Dorsolateral prefrontal cortex (tissue), 120 donors: ENCODE measurements at regions of chr3 and their contacts with region 1.

Region 1: GRCh38 chr3:9649791-9650521 is 651 bp downstream of the MTMR14 start:
- DNase-seq: no peak
- H3K4me3 ChIP-seq: peak overlapping the region; percentile 67 to 100 (median 99)
- H3K27ac ChIP-seq: peak overlapping the region in 57 of 59 donors; percentile 41 to 95 (median 83)
- H3K27me3 ChIP-seq: no peaks in the 10 kb centered on the region
- CTCF ChIP-seq: no peak

Region 2: DNA sequence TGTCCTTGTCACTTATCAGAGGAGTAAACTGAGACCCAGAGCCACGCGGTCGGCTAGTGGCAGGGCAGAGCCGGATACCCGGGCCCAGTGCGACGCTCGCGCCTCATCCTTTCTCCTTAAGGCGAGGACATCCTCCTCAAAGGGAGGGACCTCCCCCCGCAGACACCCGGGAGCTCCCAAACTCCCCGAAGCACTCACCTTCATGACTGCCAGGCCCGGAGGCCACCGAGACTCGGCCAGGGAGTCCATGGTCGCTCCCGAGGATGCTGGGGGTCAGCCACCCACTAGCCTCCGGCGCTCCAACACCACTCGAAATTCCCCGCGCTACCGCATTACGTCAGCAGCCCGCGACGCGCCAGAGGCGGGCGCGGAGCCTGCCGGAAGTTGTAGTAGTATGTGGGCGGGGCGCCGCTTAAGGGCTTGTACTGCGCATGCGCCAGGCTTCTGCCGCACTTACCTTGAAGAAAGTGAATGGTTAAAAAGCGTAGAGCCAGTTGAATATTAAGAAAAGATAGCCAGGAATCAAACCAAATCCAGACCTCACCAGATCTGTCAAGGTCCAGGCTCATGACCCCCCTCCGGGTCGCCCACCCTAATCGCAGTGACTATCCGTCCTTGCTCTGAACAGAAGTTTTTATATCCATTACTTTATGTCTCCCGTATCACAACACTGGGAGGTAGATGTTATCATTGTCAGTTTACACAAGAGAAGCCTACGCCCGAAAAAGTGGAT is 686.7 kb before region 1 on chr3 and contains the start of gene RAD18:
- intact Hi-C with region 1: loop called in 1 of 2 experiments (anchors 10 kb)
- DNase-seq: peak; percentile 79 to 92 (median 84)
- H3K4me3 ChIP-seq: peak within 1 kb of the TSS; percentile 51 to 99 (median 88)
- H3K27ac ChIP-seq: peak within 1 kb of the TSS in 56 of 59 donors; percentile 3 to 90 (median 70)
- H3K27me3 ChIP-seq: no peaks in the 10 kb centered on the region
- CTCF ChIP-seq: peak in 29 of 56 donors; percentile 5 to 61 (median 28)
- total RNA-seq, gene RAD18: 7.8 to 24.6 (median 13.3) TPM

Region 3: DNA sequence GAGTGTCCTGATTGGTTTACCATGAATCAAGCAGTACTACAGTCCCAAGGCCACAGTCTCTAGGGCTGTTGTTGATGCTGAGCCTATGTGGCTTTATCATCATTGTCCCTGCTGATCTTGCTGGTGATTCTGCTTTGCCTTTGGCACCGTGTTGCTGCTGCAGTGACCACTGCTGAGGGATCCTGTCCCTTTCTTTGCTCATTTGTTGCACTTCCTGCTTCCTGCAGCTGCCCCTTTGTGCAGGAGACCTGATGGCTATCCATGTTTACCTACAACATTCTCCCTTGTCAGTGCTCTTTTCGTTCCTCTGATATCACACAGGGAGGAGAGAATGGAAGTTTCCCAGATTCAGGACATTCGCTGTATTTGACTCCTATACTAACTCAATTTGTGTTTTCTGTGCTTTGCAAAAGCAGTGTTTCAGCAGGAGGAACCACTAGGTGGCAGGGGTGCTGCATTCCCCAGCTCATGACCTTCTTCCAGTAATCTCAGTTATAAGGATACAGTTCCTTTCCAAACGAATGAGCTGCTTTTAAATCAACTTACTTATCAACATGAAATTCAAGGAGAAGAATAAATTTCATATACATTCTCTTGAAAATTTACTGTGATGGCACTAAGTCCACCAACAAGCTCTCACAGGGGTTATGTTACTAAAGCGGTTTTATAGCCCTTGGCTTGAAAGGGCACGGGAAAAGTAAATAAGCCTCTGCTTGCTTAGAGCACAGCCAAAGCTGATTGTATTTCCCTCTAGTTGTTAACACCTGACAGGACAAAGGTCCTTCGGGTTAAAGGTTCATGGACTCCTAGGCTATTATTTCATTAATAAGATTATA is 296.8 kb before region 1 on chr3:
- intact Hi-C with region 1: loop called in 1 of 2 experiments (anchors 10 kb)
- DNase-seq: peak; percentile 53 to 87 (median 72)
- H3K4me3 ChIP-seq: no peak overlapping the region
- H3K27ac ChIP-seq: peak overlapping the region in 7 of 59 donors; percentile 2 to 49 (median 39)
- H3K27me3 ChIP-seq: no peaks in the 10 kb centered on the region
- CTCF ChIP-seq: peak; percentile 65 to 94 (median 86)

Region 4: GRCh38 chr3:9409981-9410854 is 239.7 kb before region 1 on chr3:
- intact Hi-C with region 1: no loop called
- DNase-seq: no peak
- H3K4me3 ChIP-seq: no peak overlapping the region
- H3K27ac ChIP-seq: peak overlapping the region in 3 of 59 donors; percentile 0 to 7 (median 4)
- H3K27me3 ChIP-seq: no peaks in the 10 kb centered on the region
- CTCF ChIP-seq: no peak

Region 5: DNA sequence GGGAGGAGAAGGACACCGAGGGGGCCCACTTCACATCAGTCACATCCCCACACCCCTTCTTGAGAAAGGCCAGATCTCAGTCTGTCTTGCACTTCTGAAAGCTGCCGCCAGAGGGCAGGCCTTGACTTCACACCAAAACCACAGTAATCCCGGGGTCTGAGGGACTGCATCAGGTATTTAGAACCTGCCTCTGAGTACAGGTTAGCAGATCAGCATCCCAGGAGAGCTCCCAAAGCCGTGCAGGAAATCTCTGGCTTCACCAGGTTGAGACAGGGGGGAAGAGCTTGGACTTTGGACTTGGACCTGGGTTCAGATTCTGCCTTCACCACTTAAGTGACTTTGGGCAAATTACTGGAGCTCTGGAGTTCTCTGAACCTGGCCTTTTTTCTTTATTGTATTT is 146.7 kb before region 1 on chr3:
- intact Hi-C with region 1: loop called in 1 of 2 experiments (anchors 10 kb)
- DNase-seq: peak; percentile 47 to 87 (median 72)
- H3K4me3 ChIP-seq: no peak overlapping the region
- H3K27ac ChIP-seq: no peak overlapping the region
- H3K27me3 ChIP-seq: peaks cover 0 to 3% (median 0%) of the 10 kb centered on the region in 45 donors
- CTCF ChIP-seq: peak; percentile 73 to 95 (median 84)

Region 6: DNA sequence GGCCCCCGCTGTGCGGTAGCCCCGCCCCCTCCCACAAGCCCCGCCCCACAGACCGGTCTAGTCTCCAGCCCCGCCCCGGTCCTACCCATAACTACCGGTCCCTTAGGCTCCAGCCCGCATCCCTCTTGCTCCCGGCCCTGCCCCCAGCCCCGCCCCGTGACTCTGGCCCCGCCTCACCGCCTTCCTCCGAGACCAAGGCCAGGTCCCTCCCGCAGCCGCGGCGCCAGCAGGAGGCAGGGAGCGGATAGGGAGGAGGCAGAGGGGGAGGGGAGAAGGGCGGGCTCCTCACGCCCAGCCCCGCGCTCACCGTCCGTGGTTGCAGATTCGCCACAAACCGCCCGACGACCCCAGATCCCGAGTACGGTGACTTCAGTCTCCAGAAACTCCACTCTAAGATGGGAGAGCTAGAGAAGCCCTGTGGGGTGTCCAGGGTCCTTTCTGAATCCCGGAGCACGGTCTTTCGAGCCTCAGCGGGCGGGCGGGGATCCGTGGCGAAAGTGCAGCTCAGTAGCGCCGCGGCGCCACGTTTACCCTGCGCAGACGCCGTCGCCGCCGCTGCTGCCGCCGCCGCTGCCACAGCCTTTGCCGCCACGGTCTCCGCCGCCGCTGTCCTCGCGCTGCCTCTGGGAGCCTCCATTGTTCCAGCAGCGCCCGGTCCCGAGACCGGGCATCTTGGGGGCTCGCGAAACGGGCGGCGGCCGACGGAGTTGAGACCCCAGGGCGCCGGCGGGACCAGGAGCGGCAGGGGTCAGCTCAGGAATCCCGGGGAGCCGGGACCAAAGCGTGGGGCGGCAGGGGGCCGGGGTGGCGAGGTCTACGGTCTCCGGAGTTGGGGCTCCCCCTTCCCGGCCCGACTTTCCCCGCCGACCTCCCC is 81.5 kb after region 1 on chr3 and contains the start of gene BRPF1:
- intact Hi-C with region 1: loop called (anchors 1 to 5 kb)
- DNase-seq: peak; percentile 98 to 100 (median 99)
- H3K4me3 ChIP-seq: peak within 1 kb of the TSS; percentile 70 to 100 (median 97)
- H3K27ac ChIP-seq: peak within 1 kb of the TSS; percentile 74 to 99 (median 97)
- H3K27me3 ChIP-seq: no peaks in the 10 kb centered on the region
- CTCF ChIP-seq: peak in 37 of 56 donors; percentile 10 to 64 (median 30)
- total RNA-seq, gene BRPF1: 10.7 to 25.9 (median 16.3) TPM